ENCODE measurements at regions of chr2 and their contacts with region 1.

Region 1: DNA sequence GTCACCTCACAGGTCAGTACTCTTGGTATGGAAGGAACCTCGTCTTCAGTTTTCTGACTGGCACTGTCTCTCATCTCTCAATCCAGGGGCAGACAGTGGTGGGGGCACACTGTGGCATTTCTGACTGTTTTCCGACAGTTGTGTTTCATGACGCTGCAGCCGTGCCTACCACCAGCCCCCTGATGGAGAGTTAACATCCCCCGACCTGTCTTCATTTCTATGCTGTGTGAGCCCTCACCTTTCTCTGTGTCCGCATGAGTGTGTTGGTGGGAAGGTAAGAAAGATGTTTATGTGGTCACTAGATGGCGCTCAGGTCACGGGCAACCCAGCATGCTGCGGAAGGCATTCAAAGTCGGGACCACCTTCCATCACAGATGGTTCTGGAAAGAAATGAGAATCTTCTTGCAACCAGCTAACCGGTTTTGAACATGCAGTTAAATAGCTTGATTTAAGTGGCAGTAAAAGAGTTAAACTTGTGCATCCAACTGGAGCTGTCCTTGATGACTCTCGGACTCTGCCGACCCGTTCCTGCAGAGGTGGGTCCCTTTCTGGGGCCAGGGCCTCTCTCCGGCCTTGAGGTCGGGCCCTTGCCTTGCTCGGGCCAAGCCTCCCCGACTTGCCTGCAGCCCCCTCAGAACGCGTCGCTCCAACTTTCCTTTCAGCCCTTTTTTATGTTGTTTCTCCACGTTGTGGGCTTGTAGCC is 92.4 kb downstream of the DYSF start:
- DNase-seq: no peak
- ATAC-seq: peak; percentile 72 to 74
- H3K4me3 ChIP-seq: peak overlapping the region; percentile 20
- H3K27ac ChIP-seq: peak overlapping the region; percentile 62
- H3K4me1 ChIP-seq: peaks cover 12% of the 10 kb centered on the region
- H3K27me3 ChIP-seq: peaks cover 9% of the 10 kb centered on the region
- CTCF ChIP-seq: peak; percentile 70

Region 2: GRCh38 chr2:72150157-72150865 is 604.6 kb after region 1 on chr2:
- intact Hi-C with region 1: loop called (anchors 10 kb)
- DNase-seq: peak; percentile 59
- ATAC-seq: peak; percentile 87 to 89
- H3K4me3 ChIP-seq: peak overlapping the region; percentile 58
- H3K27ac ChIP-seq: no peak overlapping the region
- H3K4me1 ChIP-seq: peaks cover 38% of the 10 kb centered on the region
- H3K27me3 ChIP-seq: peaks cover 58% of the 10 kb centered on the region
- CTCF ChIP-seq: peak; percentile 84